GM12878 (cell line): ENCODE measurements at regions of chr9 and their contacts with region 1.

Region 1: GRCh38 chr9:2645569-2645968 is 24.0 kb downstream of the VLDLR start:
- DNase-seq: peak; percentile 41
- ATAC-seq: peak; percentile 87
- H3K4me3 ChIP-seq: no peak overlapping the region
- H3K27ac ChIP-seq: no peak overlapping the region
- H3K4me1 ChIP-seq: peaks cover 9% of the 10 kb centered on the region
- H3K27me3 ChIP-seq: no peaks in the 10 kb centered on the region
- CTCF ChIP-seq: peak in 1 of 3 experiments; percentile 28; a peak in 1 of 6 replicates
- EP300 ChIP-seq: peak in 1 of 2 experiments; percentile 26; a peak in 1 of 4 replicates
- POLR2A ChIP-seq: no peak
- RAD21 ChIP-seq: peak; percentile 56

Region 2: GRCh38 chr9:2697492-2697891 is 51.9 kb after region 1 on chr9:
- CTCF ChIA-PET with region 1: interaction called, 3 read pairs
- POLR2A ChIA-PET with region 1: no interaction called
- RAD21 ChIA-PET with region 1: no interaction called
- SMC1A ChIA-PET with region 1: no interaction called
- in situ Hi-C with region 1: no loop called
- intact Hi-C with region 1: loop called (anchors 5 kb)
- DNase-seq: peak; percentile 75
- ATAC-seq: peak; percentile 97
- H3K4me3 ChIP-seq: no peak overlapping the region
- H3K27ac ChIP-seq: peak overlapping the region; percentile 55; the same call in 1 of the 2 replicates
- H3K4me1 ChIP-seq: peaks cover 4% of the 10 kb centered on the region; the same call in 1 of the 2 replicates
- H3K27me3 ChIP-seq: no peaks in the 10 kb centered on the region
- CTCF ChIP-seq: no peak
- EP300 ChIP-seq: no peak; a peak in 1 of 4 replicates
- POLR2A ChIP-seq: no peak
- RAD21 ChIP-seq: no peak